ENCODE measurements at regions of chr10 and their contacts with region 1.

Region 1: DNA sequence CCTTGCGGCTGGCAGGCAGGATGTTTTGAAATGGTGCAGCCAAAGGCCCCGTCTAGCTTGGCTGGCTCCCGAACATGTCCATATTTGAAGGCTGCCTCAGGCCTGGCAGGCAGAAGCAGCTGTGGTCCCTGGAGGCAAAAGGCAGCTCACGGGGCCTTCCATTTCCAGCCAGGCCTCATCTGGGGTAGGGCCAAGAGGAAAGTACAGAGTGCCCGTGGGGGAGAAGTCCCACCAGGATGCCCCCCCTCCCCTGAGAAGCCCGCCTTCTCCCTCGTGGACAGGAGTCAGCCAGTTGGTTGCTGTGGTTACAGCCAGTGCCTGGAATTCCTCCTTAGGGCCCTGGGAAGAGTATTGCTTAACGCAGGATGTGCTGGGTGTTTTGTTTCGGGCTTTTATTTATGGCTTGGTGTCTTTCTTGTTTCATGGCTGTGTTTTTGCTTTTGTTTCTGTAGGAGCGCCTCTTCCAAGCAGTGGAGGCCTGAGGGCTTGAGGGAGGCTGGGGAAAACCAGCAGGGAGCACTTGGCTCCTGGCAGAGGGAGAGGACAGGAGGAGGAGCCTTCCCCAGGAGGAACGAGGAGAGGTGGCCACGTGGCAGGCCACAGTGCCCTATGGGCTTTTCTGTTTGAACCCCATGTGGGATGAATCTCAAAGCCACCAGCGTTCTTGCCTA is 45.4 kb downstream of the CHST3 start:
- DNase-seq: peak; percentile 87
- H3K4me3 ChIP-seq: no peak overlapping the region
- H3K27ac ChIP-seq: peak overlapping the region; percentile 81 to 82
- H3K4me1 ChIP-seq: peaks cover 20% of the 10 kb centered on the region
- H3K27me3 ChIP-seq: no peaks in the 10 kb centered on the region
- CTCF ChIP-seq: peak in 1 of 4 experiments; percentile 19
- POLR2A ChIP-seq: no peak

Region 2: DNA sequence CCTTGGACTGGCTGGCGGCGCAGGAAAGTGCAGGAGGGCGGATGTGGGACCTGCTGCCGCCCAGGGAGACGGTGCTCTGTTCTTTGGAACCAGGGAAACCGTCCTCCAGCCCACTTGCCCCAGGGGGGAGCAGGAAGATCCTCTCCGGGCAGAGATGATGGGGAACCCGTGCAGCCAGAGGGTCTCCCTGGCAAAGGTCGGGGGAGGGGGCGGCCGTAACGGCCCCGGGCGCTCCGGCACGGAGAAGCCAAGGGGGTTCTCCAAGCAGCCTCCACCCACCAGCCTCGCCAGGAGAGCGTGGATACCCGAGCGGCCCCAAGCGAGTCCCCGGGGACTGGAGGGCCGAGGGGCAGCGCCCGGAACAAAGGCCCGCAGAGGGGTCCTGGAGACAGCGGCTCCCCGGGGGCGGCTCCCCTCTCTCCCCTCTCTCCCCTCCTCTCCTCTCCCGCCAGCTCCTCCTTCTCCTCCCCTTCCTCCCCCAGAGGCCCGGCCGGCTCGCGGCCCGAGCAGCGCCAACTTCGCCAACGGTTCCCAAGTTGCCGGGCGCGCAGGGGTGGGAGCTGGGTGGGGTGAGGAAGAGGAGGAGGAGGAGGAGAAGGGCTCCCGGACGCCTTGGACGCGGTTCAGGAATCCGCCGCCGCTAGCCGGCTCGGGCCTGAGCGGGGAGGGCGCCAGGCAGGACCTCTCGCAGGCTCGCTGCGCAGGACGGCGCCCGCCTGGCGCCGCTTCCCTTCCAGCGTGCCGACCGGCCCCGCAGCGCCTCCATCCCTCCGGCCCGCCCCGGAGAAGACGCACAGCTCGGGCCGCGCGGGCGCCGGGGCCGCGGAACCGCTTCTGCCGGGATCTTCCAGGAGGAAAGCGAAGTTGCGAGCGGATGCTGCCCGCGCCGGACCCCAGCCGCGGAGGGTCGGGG is 45.5 kb before region 1 on chr10 and contains the start of gene CHST3:
- intact Hi-C with region 1: loop called (anchors 2 kb)
- DNase-seq: peak; percentile 41
- H3K4me3 ChIP-seq: peak within 1 kb of the TSS; percentile 61 to 65
- H3K27ac ChIP-seq: peak within 1 kb of the TSS; percentile 89 to 90
- H3K4me1 ChIP-seq: peaks cover 2% of the 10 kb centered on the region
- H3K27me3 ChIP-seq: no peaks in the 10 kb centered on the region
- CTCF ChIP-seq: no peak
- POLR2A ChIP-seq: peak; percentile 23
- total RNA-seq, gene CHST3: 16.5 to 197 TPM

Region 3: GRCh38 chr10:72918352-72918751 is 908.8 kb after region 1 on chr10:
- intact Hi-C with region 1: no loop called
- DNase-seq: no peak
- H3K4me3 ChIP-seq: no peak overlapping the region
- H3K27ac ChIP-seq: no peak overlapping the region
- H3K4me1 ChIP-seq: no peaks in the 10 kb centered on the region
- H3K27me3 ChIP-seq: no peaks in the 10 kb centered on the region
- CTCF ChIP-seq: no peak
- POLR2A ChIP-seq: no peak

Measured in prostate gland (tissue), 2 donors.